ENCODE measurements at regions of chr6 and their contacts with region 1.

Region 1: GRCh38 chr6:1381481-1382330 is 7.7 kb upstream of the FOXF2 start:
- DNase-seq: peak; percentile 79
- H3K4me3 Mint-ChIP-seq: peak overlapping the region; percentile 28
- H3K27ac Mint-ChIP-seq: no peak overlapping the region
- H3K4me1 Mint-ChIP-seq: no peaks in the 10 kb centered on the region
- H3K27me3 Mint-ChIP-seq: peaks cover 65% of the 10 kb centered on the region
- CTCF ChIP-seq: peak; percentile 88

Region 2: DNA sequence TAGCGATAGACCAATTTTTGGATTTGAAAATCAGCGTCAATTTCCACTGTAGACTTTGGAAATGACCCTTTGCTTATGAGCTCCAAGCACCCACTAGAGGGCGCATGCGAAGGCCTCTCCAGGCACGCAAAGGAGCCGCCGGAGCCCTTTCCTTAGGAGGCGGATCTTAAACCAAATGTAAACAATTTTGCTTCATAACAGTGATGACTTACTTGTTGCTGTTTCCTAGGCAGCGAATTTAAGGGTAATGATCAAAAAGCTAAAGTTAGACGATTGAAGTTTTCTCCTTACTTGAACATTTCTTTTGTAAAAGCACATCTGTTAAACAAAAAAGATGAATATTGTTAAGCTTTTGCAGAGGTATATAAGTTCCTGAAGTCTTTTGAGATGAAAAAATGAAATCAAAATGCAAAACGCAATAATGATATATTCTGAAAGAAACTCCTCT is 659.6 kb before region 1 on chr6:
- CTCF ChIA-PET with region 1: interaction called, 3 read pairs
- intact Hi-C with region 1: loop called (anchors 5 kb)
- DNase-seq: peak; percentile 76
- H3K4me3 Mint-ChIP-seq: no peak overlapping the region
- H3K27ac Mint-ChIP-seq: no peak overlapping the region
- H3K4me1 Mint-ChIP-seq: no peaks in the 10 kb centered on the region
- H3K27me3 Mint-ChIP-seq: peaks cover 54% of the 10 kb centered on the region
- CTCF ChIP-seq: peak; percentile 46

Measured in Calu3 (cell line).